ENCODE measurements at regions of chr20 and their contacts with region 1.

Region 1: GRCh38 chr20:50179507-50180016 is 11.1 kb upstream of the CEBPB start:
- DNase-seq: no peak
- H3K4me3 ChIP-seq: no peak overlapping the region
- CTCF ChIP-seq: no peak

Region 2: GRCh38 chr20:50085452-50086365 is 93.9 kb before region 1 on chr20:
- in situ Hi-C with region 1: no loop called
- DNase-seq: peak; percentile 57
- H3K4me3 ChIP-seq: no peak overlapping the region
- CTCF ChIP-seq: peak; percentile 87

Region 3: GRCh38 chr20:50129662-50130355 is 49.8 kb before region 1 on chr20:
- in situ Hi-C with region 1: loop called (anchors 5 kb)
- DNase-seq: no peak
- H3K4me3 ChIP-seq: no peak overlapping the region
- CTCF ChIP-seq: no peak

Region 4: DNA sequence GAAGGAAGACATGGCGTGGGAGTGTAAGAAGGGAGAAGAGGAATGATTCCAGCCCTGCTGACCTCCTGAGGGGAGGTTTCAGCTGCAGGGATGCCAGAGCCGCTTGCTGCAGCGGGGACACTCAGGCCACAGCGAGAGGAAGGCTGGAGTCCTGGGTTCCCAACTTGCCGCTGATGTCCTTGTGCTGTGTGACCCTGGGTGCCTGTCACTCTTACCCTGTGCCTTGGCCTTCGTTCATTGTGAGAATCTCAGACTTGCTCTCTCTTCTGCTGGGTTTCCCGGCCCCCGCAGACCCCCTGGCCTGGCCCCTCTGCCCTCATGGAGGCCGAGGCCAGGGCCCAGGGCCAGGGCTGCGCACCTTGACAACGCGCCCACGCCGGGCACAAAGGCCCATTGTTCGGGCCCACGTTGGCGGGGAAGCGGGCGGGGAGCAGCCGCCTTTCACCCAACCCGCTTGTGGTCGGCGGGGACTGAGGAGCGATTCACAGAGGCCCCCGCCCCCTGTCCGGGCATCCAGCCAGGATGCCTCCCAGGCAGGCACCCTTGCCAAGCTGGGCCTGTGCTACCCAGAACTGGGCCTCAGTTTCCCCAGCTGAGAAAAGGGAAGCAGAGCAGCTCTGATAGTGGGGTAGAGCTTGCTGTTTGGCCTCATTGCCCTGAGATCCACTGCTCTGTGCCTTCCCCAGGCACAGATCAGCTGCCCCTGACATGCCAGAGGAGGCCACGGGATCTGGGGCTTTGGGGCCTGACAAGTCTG is 63.5 kb after region 1 on chr20:
- in situ Hi-C with region 1: no loop called
- DNase-seq: no peak
- H3K4me3 ChIP-seq: no peak overlapping the region
- CTCF ChIP-seq: no peak

Measured in astrocyte of the cerebellum (primary cell).